Endothelial cell of umbilical vein (primary cell): ENCODE measurements at regions of chr13 and their contacts with region 1.

Region 1: DNA sequence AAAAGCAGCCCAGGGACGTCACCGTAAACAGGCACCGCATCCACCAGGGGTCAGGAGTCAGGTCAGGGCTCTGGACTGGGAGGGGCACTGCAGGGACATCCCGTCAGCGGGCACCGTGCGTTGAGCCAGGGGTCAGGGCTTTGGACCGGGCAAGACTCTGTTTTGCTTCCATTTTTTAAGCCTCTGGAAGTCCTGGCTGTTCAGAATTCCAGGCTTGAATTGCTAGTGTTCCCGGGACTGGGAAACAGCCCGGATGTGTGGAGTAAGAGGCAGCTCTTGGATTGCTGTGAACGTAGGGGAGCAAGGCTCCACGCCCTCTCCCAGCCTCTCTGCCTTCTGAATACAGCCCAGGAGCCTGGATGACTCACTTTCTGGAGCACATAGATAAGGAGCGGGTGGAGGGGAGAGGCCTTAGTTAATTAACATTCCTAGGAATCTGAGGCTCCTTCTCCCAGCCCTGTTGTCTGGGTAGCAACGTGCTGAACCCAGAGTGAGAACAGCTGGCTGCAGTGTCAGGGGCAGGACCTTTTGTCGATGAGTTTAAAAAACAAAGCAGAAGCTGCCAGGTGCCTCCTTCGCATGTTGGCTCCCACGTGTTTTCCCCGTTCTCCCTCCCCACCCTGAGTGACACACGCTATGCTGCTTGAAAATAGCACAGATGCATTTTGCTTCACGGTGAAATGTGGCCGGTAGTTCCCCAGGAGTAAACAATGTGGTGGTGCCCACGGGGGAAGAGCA is 21.9 kb downstream of the ATP11A start:
- DNase-seq: peak; percentile 99
- H3K4me3 ChIP-seq: peak overlapping the region in 1 of 3 experiments; percentile 24
- H3K27ac ChIP-seq: peak overlapping the region; percentile 91
- H3K4me1 ChIP-seq: peaks cover 27% of the 10 kb centered on the region
- H3K27me3 ChIP-seq: no peaks in the 10 kb centered on the region
- CTCF ChIP-seq: peak; percentile 8 to 20
- POLR2A ChIP-seq: peak; percentile 24

Region 2: DNA sequence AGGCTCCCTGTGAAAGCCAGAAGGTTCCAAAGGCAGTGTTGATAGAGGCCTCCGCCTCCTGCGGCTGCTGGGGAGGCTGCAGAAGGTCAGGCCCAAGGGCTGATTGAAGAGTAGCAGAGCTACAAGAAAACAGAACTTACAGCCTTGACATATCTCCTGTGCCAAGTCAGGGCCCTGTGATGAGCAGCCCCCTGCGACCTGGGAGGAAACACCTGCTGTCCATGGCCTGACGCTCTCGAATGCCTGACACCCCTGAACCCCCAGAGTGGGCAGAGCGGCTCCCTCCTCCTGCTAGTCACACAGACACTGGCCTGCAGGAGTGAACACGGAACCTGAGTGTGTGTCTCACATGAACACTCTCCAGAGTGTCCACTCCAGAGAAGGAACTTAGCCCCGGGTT is 85.6 kb before region 1 on chr13:
- CTCF ChIA-PET with region 1: no interaction called
- POLR2A ChIA-PET with region 1: no interaction called
- dilution Hi-C with region 1: no loop called
- intact Hi-C with region 1: no loop called
- DNase-seq: no peak
- H3K4me3 ChIP-seq: no peak overlapping the region
- H3K27ac ChIP-seq: no peak overlapping the region
- H3K4me1 ChIP-seq: no peaks in the 10 kb centered on the region
- H3K27me3 ChIP-seq: peaks cover 0 to 2% of the 10 kb centered on the region in 2 experiments
- CTCF ChIP-seq: no peak
- POLR2A ChIP-seq: no peak

Region 3: GRCh38 chr13:112674412-112675365 is 37.0 kb before region 1 on chr13:
- CTCF ChIA-PET with region 1: no interaction called
- POLR2A ChIA-PET with region 1: interaction called, 14 read pairs
- dilution Hi-C with region 1: no loop called
- intact Hi-C with region 1: no loop called
- DNase-seq: no peak
- H3K4me3 ChIP-seq: no peak overlapping the region
- H3K27ac ChIP-seq: no peak overlapping the region
- H3K4me1 ChIP-seq: no peaks in the 10 kb centered on the region
- H3K27me3 ChIP-seq: peaks cover 2 to 11% of the 10 kb centered on the region in 2 experiments
- CTCF ChIP-seq: no peak
- POLR2A ChIP-seq: no peak

Region 4: DNA sequence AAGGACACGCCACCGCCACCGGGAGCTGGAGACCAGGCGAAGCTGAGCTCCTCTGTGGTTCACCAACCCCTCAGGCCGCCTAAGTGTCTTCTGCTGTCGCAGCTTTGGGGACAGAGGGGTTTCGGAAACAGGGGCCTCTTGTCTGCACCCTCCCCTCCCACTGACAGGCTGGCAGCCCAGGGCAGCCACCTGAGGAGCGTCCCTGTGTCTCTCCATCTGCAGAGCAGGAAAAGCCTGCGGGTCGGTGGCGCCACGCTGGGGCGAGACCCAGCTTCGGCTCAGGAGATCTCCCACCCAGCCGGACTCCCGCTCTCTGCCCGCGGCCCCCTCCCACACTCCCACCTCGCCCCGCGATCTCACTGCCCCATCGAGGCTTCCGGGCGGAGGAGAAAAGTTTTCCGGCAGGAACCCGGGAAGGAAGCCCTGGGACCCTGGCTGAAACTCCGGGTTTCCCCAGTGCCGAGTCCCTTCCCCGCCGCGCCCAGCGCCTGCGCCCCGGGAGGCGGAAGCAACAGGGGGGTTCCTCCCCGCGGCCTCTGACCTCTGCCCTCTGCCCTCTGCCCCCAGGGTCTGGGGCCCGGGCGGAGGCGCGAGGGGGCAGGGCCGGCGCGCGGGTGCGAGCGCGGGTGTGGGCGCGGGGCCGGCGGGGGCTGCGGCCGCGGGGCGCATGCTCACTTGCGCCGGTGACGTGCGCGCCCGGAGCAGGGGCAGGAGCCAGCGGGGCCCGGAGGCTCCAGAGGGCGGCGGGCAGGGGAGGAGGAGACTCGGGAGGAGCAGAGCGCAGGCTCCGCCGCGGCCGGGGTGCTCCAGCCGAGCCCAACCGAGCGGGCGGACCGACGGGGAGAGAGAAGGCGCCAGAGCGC is 22.2 kb before region 1 on chr13 and contains the start of gene ATP11A:
- CTCF ChIA-PET with region 1: interaction called, 5 read pairs
- POLR2A ChIA-PET with region 1: no interaction called
- dilution Hi-C with region 1: no loop called
- intact Hi-C with region 1: loop called (anchors 1 kb)
- DNase-seq: peak; percentile 90
- H3K4me3 ChIP-seq: peak within 1 kb of the TSS; percentile 92 to 97 (median 96)
- H3K27ac ChIP-seq: peak within 1 kb of the TSS; percentile 49
- H3K4me1 ChIP-seq: peaks cover 14% of the 10 kb centered on the region
- H3K27me3 ChIP-seq: no peaks in the 10 kb centered on the region
- CTCF ChIP-seq: no peak
- POLR2A ChIP-seq: no peak
- total RNA-seq, gene ATP11A: 71.7 and 88.1 TPM in 2 replicates

Region 5: DNA sequence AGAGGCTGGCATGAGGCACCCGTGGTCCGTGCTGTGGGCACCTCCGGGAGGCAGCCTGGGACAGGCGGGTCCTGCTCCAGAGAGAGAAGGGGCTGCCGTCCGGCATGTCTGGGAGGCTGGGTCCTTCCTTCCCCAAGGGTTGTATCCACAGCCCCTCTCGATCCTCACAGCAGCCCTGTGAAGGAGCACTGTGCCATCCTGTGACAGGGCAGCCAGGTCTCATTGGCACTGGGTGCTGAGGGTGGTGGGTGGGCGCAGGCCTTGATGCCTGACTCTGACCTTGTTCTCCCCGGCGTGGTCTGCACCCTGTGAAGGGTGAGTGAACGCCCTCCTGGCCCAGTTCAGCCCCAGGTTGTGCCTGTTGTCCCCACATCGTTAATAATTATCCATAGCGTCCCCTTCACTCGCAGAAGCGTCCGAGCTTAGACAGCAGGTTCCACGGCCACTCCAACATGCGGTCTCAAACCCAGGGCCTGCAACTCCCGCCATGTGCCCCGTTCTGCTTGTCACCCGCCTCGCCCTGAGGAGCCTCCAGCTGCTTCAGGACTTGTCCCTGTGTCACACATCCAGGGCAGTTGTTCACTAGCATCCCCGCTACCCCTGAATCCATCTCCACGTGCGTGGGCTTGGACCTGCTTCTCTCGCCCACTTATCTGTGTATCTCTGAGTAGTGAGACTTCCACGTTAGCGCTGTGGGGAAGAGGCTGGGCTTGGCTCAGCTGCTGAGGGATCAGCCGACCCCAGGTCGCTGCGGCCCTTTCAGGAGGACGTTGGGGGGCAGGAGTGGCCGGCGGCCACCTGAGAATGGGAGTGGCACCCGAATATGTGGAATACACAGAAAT is 11.2 kb before region 1 on chr13:
- CTCF ChIA-PET with region 1: interaction called, 4 read pairs
- POLR2A ChIA-PET with region 1: no interaction called
- dilution Hi-C with region 1: no loop called
- intact Hi-C with region 1: loop called (anchors 1 kb)
- DNase-seq: no peak
- H3K4me3 ChIP-seq: no peak overlapping the region
- H3K27ac ChIP-seq: peak overlapping the region; percentile 3
- H3K4me1 ChIP-seq: peaks cover 15% of the 10 kb centered on the region
- H3K27me3 ChIP-seq: no peaks in the 10 kb centered on the region
- CTCF ChIP-seq: no peak
- POLR2A ChIP-seq: no peak

Region 6: DNA sequence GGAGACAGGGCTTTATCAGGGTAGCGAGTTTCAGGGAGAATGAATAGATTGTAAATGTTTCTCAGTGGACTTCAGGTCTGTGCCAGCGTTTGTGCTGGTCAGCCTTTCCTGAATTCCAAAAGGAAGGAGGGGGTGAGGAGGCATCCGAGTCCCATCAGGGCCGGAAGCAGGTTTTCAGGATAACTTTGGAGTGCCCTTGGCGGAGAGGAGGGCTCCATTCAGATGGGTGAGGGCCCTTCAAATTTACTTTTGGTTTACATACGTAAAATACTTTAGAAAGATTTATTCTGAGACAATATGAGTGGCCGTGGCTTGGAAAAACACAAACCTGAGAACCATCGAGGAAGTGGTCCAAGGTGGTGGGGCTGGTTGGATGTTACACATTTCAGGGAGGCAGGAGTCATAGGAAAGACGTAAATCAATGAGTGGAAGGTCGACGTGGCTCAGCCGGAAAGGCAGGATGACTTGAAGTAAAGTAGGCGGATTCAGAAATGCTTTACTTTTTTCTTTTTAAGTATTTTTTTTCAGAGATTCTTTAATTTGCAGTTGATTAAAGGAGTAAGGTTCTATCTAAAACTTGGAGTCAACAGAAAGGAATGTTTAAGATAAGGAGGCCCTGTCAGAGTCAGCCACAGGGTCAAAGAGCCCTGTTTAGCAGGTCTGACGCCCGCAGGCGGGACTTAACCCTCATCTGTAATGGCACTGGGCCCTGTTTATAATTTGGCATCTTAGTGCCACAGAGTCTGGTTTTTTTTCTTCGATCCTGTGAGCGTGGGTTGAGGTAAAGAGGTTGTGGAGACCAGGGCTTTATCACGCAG is 10.9 kb after region 1 on chr13:
- CTCF ChIA-PET with region 1: interaction called, 6 read pairs
- POLR2A ChIA-PET with region 1: no interaction called
- dilution Hi-C with region 1: no loop called
- intact Hi-C with region 1: loop called (anchors 1 kb)
- DNase-seq: peak; percentile 92
- H3K4me3 ChIP-seq: peak overlapping the region in 1 of 3 experiments; percentile 17
- H3K27ac ChIP-seq: peak overlapping the region; percentile 93
- H3K4me1 ChIP-seq: peaks cover 32% of the 10 kb centered on the region
- H3K27me3 ChIP-seq: no peaks in the 10 kb centered on the region
- CTCF ChIP-seq: no peak
- POLR2A ChIP-seq: no peak

Region 7: GRCh38 chr13:112783135-112783977 is 71.7 kb after region 1 on chr13:
- CTCF ChIA-PET with region 1: no interaction called
- POLR2A ChIA-PET with region 1: no interaction called
- dilution Hi-C with region 1: no loop called
- intact Hi-C with region 1: loop called (anchors 5 kb)
- DNase-seq: no peak
- H3K4me3 ChIP-seq: no peak overlapping the region
- H3K27ac ChIP-seq: no peak overlapping the region
- H3K4me1 ChIP-seq: peaks cover 2% of the 10 kb centered on the region
- H3K27me3 ChIP-seq: no peaks in the 10 kb centered on the region
- CTCF ChIP-seq: no peak
- POLR2A ChIP-seq: no peak